CD8-positive, alpha-beta T cell (primary cell): ENCODE measurements at regions of chr17 and their contacts with region 1.

Region 1: GRCh38 chr17:82022981-82023374 is at the start of gene LRRC45:
- DNase-seq: peak; percentile 100
- ATAC-seq: peak; percentile 95
- H3K4me3 ChIP-seq: peak within 1 kb of the TSS; percentile 69 to 90
- H3K4me3 Mint-ChIP-seq: peak within 1 kb of the TSS; percentile 84
- H3K27ac ChIP-seq: peak within 1 kb of the TSS; percentile 42 to 60
- H3K27ac Mint-ChIP-seq: no peak within 1 kb of the TSS
- H3K4me1 ChIP-seq: peaks cover 31% of the 10 kb centered on the region
- H3K4me1 Mint-ChIP-seq: peaks cover 23% of the 10 kb centered on the region
- H3K27me3 ChIP-seq: no peaks in the 10 kb centered on the region
- H3K27me3 Mint-ChIP-seq: no peaks in the 10 kb centered on the region
- CTCF ChIP-seq: no peak
- total RNA-seq, gene LRRC45: 5.1 to 5.6 TPM

Region 2: DNA sequence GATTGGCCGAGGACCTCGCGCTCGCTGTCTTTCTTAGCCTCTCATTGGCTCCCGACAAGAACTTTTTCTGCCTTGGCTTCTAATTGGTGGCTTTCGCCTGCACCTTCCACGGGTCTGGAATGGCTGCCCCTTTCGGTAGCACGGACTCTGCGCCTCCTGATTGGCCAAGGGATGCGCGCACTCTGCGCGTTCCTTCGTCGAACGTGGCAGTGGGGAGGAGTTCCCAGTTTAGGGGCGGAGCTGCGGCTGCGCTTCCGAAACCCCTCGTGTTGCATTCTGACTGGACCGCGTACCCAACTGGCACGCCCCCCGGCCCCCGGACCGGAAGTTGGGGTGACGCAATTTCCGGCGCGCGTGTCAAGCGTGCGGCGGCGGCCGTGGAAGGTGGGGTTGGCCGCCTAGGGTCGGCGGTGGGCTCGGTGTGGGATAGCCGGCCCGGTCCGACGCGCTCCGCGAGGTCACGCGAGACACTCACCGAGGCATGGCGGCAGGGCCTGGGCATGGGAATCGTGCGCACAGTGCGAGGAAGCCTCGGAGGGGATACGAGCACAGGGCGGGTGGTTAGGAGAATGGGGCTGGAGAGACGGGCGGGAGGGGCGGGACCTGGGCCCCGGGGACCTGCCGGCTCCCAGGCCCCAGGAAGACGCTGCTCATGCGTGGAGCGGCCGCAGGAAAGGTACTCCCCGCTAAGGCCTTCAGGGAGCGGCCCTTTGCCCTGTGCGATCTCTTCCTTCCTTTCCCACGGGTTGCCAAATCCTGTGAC is 162.0 kb before region 1 on chr17:
- CTCF ChIA-PET with region 1: no interaction called
- POLR2A ChIA-PET with region 1: no interaction called
- intact Hi-C with region 1: loop called in 1 of 2 experiments (anchors 2 kb)
- DNase-seq: peak; percentile 98 to 100 (median 99)
- ATAC-seq: peak; percentile 87
- H3K4me3 ChIP-seq: peak overlapping the region; percentile 54 to 72
- H3K4me3 Mint-ChIP-seq: peak overlapping the region; percentile 90
- H3K27ac ChIP-seq: peak overlapping the region; percentile 88 to 98
- H3K27ac Mint-ChIP-seq: peak overlapping the region; percentile 98
- H3K4me1 ChIP-seq: peaks cover 33% of the 10 kb centered on the region
- H3K4me1 Mint-ChIP-seq: peaks cover 44% of the 10 kb centered on the region
- H3K27me3 ChIP-seq: no peaks in the 10 kb centered on the region
- H3K27me3 Mint-ChIP-seq: no peaks in the 10 kb centered on the region
- CTCF ChIP-seq: no peak

Region 3: GRCh38 chr17:81967533-81968395 is 55.2 kb before region 1 on chr17:
- CTCF ChIA-PET with region 1: interaction called, 220 read pairs
- POLR2A ChIA-PET with region 1: interaction called, 10 read pairs
- intact Hi-C with region 1: loop called in 1 of 2 experiments (anchors 2 kb)
- DNase-seq: peak; percentile 64 to 93 (median 87)
- ATAC-seq: peak; percentile 91
- H3K4me3 ChIP-seq: peak overlapping the region; percentile 45 to 64
- H3K4me3 Mint-ChIP-seq: peak overlapping the region; percentile 72
- H3K27ac ChIP-seq: peak overlapping the region in 1 of 2 experiments; percentile 27
- H3K27ac Mint-ChIP-seq: peak overlapping the region; percentile 77
- H3K4me1 ChIP-seq: peaks cover 33% of the 10 kb centered on the region
- H3K4me1 Mint-ChIP-seq: peaks cover 27% of the 10 kb centered on the region
- H3K27me3 ChIP-seq: peaks cover 0 to 3% of the 10 kb centered on the region in 2 experiments
- H3K27me3 Mint-ChIP-seq: peaks cover 2% of the 10 kb centered on the region
- CTCF ChIP-seq: no peak

Region 4: GRCh38 chr17:82065638-82066303 is 42.8 kb after region 1 on chr17 and contains the start of gene DUS1L:
- CTCF ChIA-PET with region 1: interaction called, 4 read pairs
- POLR2A ChIA-PET with region 1: no interaction called
- intact Hi-C with region 1: loop called in 1 of 2 experiments (anchors 1 kb)
- DNase-seq: peak; percentile 44 to 86 (median 68)
- ATAC-seq: peak; percentile 87
- H3K4me3 ChIP-seq: peak within 1 kb of the TSS; percentile 79 to 87
- H3K4me3 Mint-ChIP-seq: peak within 1 kb of the TSS; percentile 82
- H3K27ac ChIP-seq: peak within 1 kb of the TSS; percentile 70 to 91
- H3K27ac Mint-ChIP-seq: peak within 1 kb of the TSS; percentile 92
- H3K4me1 ChIP-seq: peaks cover 20% of the 10 kb centered on the region
- H3K4me1 Mint-ChIP-seq: peaks cover 14% of the 10 kb centered on the region
- H3K27me3 ChIP-seq: no peaks in the 10 kb centered on the region
- H3K27me3 Mint-ChIP-seq: no peaks in the 10 kb centered on the region
- CTCF ChIP-seq: no peak
- total RNA-seq, gene DUS1L: 159 to 174 TPM

Region 5: GRCh38 chr17:82153745-82154375 is 130.9 kb after region 1 on chr17:
- CTCF ChIA-PET with region 1: interaction called, 105 read pairs
- POLR2A ChIA-PET with region 1: no interaction called
- intact Hi-C with region 1: no loop called
- DNase-seq: peak; percentile 71 to 92 (median 84)
- ATAC-seq: peak; percentile 100
- H3K4me3 ChIP-seq: no peak overlapping the region
- H3K4me3 Mint-ChIP-seq: no peak overlapping the region
- H3K27ac ChIP-seq: no peak overlapping the region
- H3K27ac Mint-ChIP-seq: peak overlapping the region; percentile 57
- H3K4me1 ChIP-seq: peaks cover 7% of the 10 kb centered on the region
- H3K4me1 Mint-ChIP-seq: peaks cover 5% of the 10 kb centered on the region
- H3K27me3 ChIP-seq: no peaks in the 10 kb centered on the region
- H3K27me3 Mint-ChIP-seq: no peaks in the 10 kb centered on the region
- CTCF ChIP-seq: peak; percentile 98